ENCODE measurements at regions of chr3 and their contacts with region 1.

Region 1: GRCh38 chr3:137105277-137105977 is 147.6 kb downstream of the IL20RB start:
- DNase-seq: peak in 3 of 5 donors; percentile 34 to 87 (median 85)
- H3K4me3 ChIP-seq: no peak overlapping the region
- H3K27ac ChIP-seq: no peak overlapping the region
- H3K4me1 ChIP-seq: no peaks in the 10 kb centered on the region
- H3K27me3 ChIP-seq: no peaks in the 10 kb centered on the region
- CTCF ChIP-seq: peak; percentile 64

Region 2: GRCh38 chr3:137249311-137249940 is 144.0 kb after region 1 on chr3:
- intact Hi-C with region 1: no loop called
- DNase-seq: no peak
- H3K4me3 ChIP-seq: no peak overlapping the region
- H3K27ac ChIP-seq: no peak overlapping the region
- H3K4me1 ChIP-seq: no peaks in the 10 kb centered on the region
- H3K27me3 ChIP-seq: no peaks in the 10 kb centered on the region
- CTCF ChIP-seq: no peak

Region 3: GRCh38 chr3:137946345-137946973 is 841.0 kb after region 1 on chr3:
- intact Hi-C with region 1: loop called (anchors 10 kb)
- DNase-seq: peak; percentile 52 to 83 (median 61)
- H3K4me3 ChIP-seq: no peak overlapping the region
- H3K27ac ChIP-seq: no peak overlapping the region
- H3K4me1 ChIP-seq: no peaks in the 10 kb centered on the region
- H3K27me3 ChIP-seq: no peaks in the 10 kb centered on the region
- CTCF ChIP-seq: peak; percentile 42